Aorta (tissue), 5 donors: ENCODE measurements at regions of chr9 and their contacts with region 1.

Region 1: GRCh38 chr9:69672596-69673310 is 582 bp upstream of the APBA1 start:
- DNase-seq: peak; percentile 91 to 95
- ATAC-seq: peak; percentile 93
- H3K4me3 ChIP-seq: peak overlapping the region; percentile 72 to 96
- H3K27ac ChIP-seq: peak overlapping the region in 1 of 2 donors; percentile 46
- H3K4me1 ChIP-seq: no peaks in the 10 kb centered on the region
- H3K27me3 ChIP-seq: no peaks in the 10 kb centered on the region

Region 2: GRCh38 chr9:69564557-69564956 is 108.2 kb before region 1 on chr9:
- intact Hi-C with region 1: no loop called
- DNase-seq: no peak
- ATAC-seq: no peak
- H3K4me3 ChIP-seq: no peak overlapping the region
- H3K27ac ChIP-seq: no peak overlapping the region
- H3K4me1 ChIP-seq: no peaks in the 10 kb centered on the region
- H3K27me3 ChIP-seq: no peaks in the 10 kb centered on the region

Region 3: GRCh38 chr9:69622676-69623075 is 50.1 kb before region 1 on chr9:
- intact Hi-C with region 1: no loop called
- DNase-seq: no peak
- ATAC-seq: no peak
- H3K4me3 ChIP-seq: no peak overlapping the region
- H3K27ac ChIP-seq: no peak overlapping the region
- H3K4me1 ChIP-seq: no peaks in the 10 kb centered on the region
- H3K27me3 ChIP-seq: no peaks in the 10 kb centered on the region

Region 4: DNA sequence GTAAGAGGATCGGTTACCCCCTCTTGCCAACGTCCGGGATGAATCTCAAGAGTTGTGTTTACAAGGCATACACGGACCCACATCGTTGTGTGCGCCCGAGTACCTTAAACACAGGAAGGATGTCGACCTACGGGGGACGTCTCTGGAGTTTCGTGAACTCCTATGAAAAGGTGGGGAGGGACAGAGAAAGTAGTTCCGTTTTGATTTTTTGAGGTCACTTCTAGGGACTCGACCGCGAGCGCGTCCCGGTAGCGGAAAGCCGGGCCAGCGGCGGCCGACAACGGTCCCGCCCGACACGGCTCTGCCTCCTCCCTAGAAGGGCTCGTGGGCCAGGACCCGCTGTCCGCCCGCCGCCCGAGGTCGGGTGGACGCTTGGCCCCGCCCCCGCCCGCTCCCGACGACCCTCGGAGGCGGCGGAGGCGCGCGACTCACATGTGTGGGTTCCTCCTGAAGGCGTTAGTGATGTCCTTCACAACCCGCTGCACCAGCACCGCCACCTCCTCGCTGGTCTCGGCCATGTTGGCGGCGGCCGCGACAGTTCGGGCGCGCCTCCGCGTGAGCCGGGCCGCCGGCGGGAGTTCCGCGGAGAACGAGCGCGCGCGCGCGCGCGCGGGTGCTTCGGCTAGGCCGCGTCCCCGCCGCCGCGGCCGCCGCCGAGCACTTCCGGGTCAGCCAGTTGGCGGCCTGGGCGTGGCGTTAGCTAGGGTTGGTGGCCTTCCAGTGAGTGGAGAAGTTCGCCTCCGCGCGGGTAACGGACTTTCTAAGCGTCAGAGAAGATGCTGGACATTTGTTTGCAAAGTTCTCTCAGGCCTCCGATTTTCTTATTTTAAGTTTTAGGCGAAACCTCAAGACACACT is 86.9 kb after region 1 on chr9 and contains the start of gene PTAR1:
- intact Hi-C with region 1: loop called (anchors 2 to 5 kb)
- DNase-seq: peak; percentile 95 to 97
- ATAC-seq: peak; percentile 97
- H3K4me3 ChIP-seq: peak within 1 kb of the TSS; percentile 85 to 95
- H3K27ac ChIP-seq: peak within 1 kb of the TSS; percentile 47 to 85
- H3K4me1 ChIP-seq: no peaks in the 10 kb centered on the region
- H3K27me3 ChIP-seq: no peaks in the 10 kb centered on the region
- total RNA-seq, gene PTAR1: 52.2 to 54.4 TPM

Region 5: DNA sequence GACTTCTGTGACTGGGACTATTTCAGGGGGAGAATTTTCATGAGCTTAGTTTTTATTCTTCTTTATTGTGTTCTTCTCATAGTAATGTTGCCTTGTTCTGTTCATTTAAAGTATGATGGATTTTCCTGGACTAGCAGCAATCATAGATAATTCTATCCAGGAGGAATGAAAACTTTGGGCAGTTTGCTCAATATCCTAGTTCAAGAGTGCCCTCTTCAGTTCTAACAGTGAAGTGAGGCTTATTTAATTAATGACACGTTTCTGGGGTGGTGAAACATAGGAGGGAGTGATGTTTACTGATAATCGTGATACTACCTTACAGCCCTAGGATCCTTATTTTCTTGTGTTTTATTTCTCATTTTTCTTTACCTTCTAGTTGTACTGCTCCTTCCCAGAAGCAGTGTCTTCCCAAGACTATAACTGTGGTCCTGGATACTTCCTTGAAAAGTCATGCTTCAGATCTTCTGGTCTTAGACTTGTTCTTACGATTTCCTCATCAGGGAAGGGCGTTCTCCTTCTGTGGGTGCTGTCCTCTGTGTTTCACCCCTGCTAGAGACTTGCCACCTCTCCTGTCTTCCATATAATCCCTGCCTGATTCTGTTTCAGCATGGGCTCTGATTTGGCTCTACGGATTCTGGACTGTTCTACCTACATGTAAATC is 205.2 kb after region 1 on chr9:
- intact Hi-C with region 1: loop called in 1 of 2 experiments (anchors 10 kb)
- DNase-seq: no peak
- ATAC-seq: no peak
- H3K4me3 ChIP-seq: no peak overlapping the region
- H3K27ac ChIP-seq: no peak overlapping the region
- H3K4me1 ChIP-seq: no peaks in the 10 kb centered on the region
- H3K27me3 ChIP-seq: no peaks in the 10 kb centered on the region

Region 6: DNA sequence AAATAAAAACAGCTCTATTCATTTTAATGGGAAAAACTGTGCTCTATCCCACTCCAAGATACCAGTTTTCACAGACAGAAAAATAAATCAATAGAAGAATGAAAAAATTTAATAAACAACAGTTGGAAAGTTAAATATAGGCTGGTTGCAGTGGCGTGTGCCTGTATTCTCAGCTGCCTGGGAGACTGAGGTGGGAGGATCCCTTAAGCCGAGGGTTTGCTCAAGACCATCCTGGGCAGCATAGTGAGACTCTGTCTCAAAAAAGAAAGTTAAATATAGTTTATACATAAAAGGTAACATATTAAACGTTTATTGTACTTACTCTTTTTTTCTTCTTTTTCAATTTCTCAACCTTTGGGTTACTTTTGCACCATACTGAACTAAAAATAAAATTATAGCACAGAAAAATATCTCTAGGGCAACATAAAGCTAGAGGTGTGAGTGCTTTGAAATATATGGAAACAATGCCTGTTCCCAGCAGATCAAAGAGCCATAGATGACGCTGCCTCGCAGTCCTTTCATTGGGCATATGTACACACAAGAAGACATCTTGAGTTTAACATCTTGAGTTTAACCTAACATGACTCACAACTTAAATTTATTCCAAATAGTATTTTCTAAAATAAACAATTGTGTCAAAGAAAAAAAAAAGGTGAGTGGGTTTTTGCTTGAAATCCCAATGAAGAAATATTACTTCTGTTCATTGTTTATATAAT is 767.4 kb after region 1 on chr9:
- intact Hi-C with region 1: no loop called
- DNase-seq: no peak
- ATAC-seq: no peak
- H3K4me3 ChIP-seq: no peak overlapping the region
- H3K27ac ChIP-seq: no peak overlapping the region
- H3K4me1 ChIP-seq: peaks cover 0 to 6% of the 10 kb centered on the region in 2 donors
- H3K27me3 ChIP-seq: no peaks in the 10 kb centered on the region